GM12878 (cell line): ENCODE measurements at regions of chr9 and their contacts with region 1.

Region 1: GRCh38 chr9:112074250-112075008 is 100.7 kb downstream of the SUSD1 start:
- DNase-seq: peak; percentile 84
- ATAC-seq: peak; percentile 72
- H3K4me3 ChIP-seq: peak overlapping the region; percentile 4; the same call in 1 of the 2 replicates
- H3K27ac ChIP-seq: peak overlapping the region; percentile 73
- H3K4me1 ChIP-seq: peaks cover 66% of the 10 kb centered on the region
- H3K27me3 ChIP-seq: no peaks in the 10 kb centered on the region
- CTCF ChIP-seq: peak; percentile 91 to 97 (median 97)
- EP300 ChIP-seq: no peak
- POLR2A ChIP-seq: no peak
- RAD21 ChIP-seq: peak; percentile 99

Region 2: DNA sequence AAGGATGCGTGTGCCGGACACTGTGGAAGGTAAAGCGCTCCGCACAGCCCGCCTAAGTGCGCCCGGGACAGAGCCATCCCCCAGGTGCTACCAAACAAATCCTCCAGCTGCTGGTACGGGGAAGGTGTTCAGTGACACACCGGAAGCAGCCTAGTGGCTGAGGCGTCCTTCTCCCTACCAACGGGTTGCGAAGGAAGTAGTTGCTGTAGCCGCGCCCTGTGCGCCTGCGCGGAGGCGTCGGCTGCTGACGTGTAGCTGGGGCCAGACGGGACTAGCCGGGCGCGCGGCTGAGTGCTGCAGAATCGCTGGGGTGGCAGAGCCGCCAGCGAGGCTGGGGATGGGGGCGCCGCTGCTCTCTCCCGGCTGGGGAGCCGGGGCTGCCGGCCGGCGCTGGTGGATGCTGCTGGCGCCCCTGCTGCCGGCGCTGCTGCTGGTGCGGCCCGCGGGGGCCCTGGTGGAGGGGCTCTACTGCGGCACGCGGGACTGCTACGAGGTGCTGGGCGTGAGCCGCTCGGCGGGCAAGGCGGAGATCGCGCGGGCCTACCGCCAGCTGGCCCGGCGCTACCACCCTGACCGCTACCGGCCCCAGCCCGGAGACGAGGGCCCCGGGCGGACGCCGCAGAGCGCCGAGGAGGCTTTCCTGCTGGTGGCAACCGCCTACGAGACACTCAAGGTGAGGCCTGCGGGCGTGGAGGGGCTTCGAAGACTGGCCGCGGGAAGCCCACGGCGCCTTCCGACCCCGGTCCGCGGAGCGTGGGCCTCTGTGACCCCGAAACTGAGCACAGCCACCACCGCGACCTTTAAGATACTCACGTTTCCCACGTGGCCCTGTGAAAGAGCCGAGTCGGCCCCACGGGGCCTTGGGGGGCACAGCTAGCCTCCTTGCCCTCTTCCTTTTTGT is 443.1 kb before region 1 on chr9 and contains the start of gene DNAJC25:
- CTCF ChIA-PET with region 1: no interaction called
- POLR2A ChIA-PET with region 1: no interaction called
- RAD21 ChIA-PET with region 1: interaction called, 3 read pairs
- SMC1A ChIA-PET with region 1: no interaction called
- in situ Hi-C with region 1: no loop called
- intact Hi-C with region 1: loop called (anchors 10 kb)
- DNase-seq: peak; percentile 97
- ATAC-seq: peak; percentile 94
- H3K4me3 ChIP-seq: peak within 1 kb of the TSS; percentile 86
- H3K27ac ChIP-seq: peak within 1 kb of the TSS; percentile 57
- H3K4me1 ChIP-seq: no peaks in the 10 kb centered on the region; the same call in 1 of the 2 replicates
- H3K27me3 ChIP-seq: no peaks in the 10 kb centered on the region
- CTCF ChIP-seq: no peak
- EP300 ChIP-seq: no peak
- POLR2A ChIP-seq: peak; percentile 100
- RAD21 ChIP-seq: no peak
- polyA plus RNA-seq, gene DNAJC25: 2.4 to 3.7 TPM

Region 3: GRCh38 chr9:111902396-111903147 is 171.9 kb before region 1 on chr9:
- CTCF ChIA-PET with region 1: interaction called, 8 read pairs
- POLR2A ChIA-PET with region 1: interaction called, 8 read pairs
- RAD21 ChIA-PET with region 1: interaction called, 11 read pairs
- SMC1A ChIA-PET with region 1: interaction called, 23 read pairs
- in situ Hi-C with region 1: no loop called
- intact Hi-C with region 1: loop called (anchors 2 kb)
- DNase-seq: no peak
- ATAC-seq: no peak
- H3K4me3 ChIP-seq: peak overlapping the region; percentile 80; the same call in 1 of the 2 replicates
- H3K27ac ChIP-seq: peak overlapping the region; percentile 37; the same call in 1 of the 2 replicates
- H3K4me1 ChIP-seq: peaks cover 26% of the 10 kb centered on the region
- H3K27me3 ChIP-seq: no peaks in the 10 kb centered on the region
- CTCF ChIP-seq: no peak
- EP300 ChIP-seq: no peak
- POLR2A ChIP-seq: no peak
- RAD21 ChIP-seq: no peak

Region 4: DNA sequence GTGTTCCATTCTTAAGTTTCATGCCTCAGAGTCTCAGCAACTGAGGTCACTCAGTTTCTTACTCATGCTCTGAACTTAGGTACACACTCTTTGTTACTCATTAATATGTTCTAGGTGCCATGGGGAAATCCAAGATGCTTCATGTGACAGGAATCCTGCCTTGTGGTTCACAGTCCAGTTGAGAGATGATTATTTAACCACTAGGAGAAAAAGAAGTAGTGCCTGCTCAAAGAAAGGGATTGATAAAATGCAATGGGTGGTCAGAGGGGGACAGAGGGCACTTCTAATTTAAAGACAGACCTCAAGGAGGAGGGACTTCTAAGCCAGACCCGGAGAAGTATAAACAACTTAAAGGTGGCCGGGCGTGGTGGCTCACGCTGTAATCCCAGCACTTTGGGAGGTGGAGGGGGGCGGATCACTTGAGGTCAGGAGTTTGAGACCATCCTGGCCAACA is 108.8 kb before region 1 on chr9:
- CTCF ChIA-PET with region 1: interaction called, 8 read pairs
- POLR2A ChIA-PET with region 1: interaction called, 5 read pairs
- RAD21 ChIA-PET with region 1: interaction called, 20 read pairs
- SMC1A ChIA-PET with region 1: interaction called, 12 read pairs
- in situ Hi-C with region 1: no loop called
- intact Hi-C with region 1: no loop called
- DNase-seq: peak; percentile 90
- ATAC-seq: peak; percentile 80
- H3K4me3 ChIP-seq: no peak overlapping the region
- H3K27ac ChIP-seq: peak overlapping the region; percentile 56
- H3K4me1 ChIP-seq: peaks cover 25% of the 10 kb centered on the region
- H3K27me3 ChIP-seq: no peaks in the 10 kb centered on the region
- CTCF ChIP-seq: no peak
- EP300 ChIP-seq: peak; percentile 82 to 89
- POLR2A ChIP-seq: no peak
- RAD21 ChIP-seq: 0 out of 2 replicates have a peak, but pooled peaks have one; percentile 3

Region 5: GRCh38 chr9:112012026-112012902 is 62.2 kb before region 1 on chr9:
- CTCF ChIA-PET with region 1: interaction called, 21 read pairs
- POLR2A ChIA-PET with region 1: interaction called, 9 read pairs
- RAD21 ChIA-PET with region 1: interaction called, 40 read pairs
- SMC1A ChIA-PET with region 1: interaction called, 33 read pairs
- in situ Hi-C with region 1: no loop called
- intact Hi-C with region 1: no loop called
- DNase-seq: peak; percentile 96
- ATAC-seq: peak; percentile 92
- H3K4me3 ChIP-seq: no peak overlapping the region
- H3K27ac ChIP-seq: peak overlapping the region; percentile 92
- H3K4me1 ChIP-seq: peaks cover 52% of the 10 kb centered on the region
- H3K27me3 ChIP-seq: no peaks in the 10 kb centered on the region
- CTCF ChIP-seq: no peak
- EP300 ChIP-seq: peak; percentile 96 to 97
- POLR2A ChIP-seq: peak; percentile 43; the same call in 1 of the 2 replicates
- RAD21 ChIP-seq: peak; percentile 35

Region 6: DNA sequence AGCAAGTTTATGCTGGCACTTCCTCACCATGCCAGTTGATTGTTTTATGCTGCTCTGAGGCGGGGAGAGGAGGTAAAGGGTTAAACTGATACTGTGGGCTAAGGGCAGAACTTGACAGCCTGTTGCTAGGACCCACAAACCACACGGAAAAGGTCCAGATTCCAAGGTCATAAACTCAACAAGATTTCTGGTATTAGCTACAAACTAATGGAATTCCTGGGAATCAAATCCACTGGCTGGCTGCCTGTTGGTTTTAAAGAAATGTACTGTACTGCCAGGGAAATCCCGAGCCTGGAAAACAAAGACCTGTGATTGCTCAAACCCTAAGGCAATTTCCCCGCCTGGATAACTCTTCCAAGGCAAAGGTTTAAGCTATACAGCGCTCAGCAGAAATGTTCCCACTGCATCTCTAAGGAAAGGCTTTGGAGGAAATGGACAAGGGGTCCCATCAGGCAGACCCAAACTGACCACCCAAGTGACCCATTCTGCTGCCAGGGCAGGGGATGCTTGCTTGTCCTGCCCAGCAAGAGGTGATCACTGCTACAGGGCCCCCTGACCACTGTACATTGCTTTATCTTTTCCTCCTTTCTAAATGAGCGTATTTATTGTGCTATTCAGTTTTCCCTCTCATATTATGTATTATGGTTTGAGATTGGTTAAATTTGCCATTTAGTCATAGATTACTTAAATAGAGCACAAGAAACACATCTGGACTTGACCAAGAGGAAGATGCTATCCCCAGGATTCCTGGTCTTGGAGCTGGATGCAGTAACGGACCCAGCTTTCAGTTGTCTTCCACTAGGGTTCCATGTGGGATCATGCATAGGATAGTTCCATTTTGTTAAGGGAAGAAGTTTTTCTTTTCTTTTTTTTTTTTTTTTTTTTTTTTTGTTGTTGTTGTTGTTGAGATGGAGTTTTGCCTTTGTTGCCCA is 23.6 kb before region 1 on chr9:
- CTCF ChIA-PET with region 1: interaction called, 14 read pairs
- POLR2A ChIA-PET with region 1: interaction called, 15 read pairs
- RAD21 ChIA-PET with region 1: interaction called, 15 read pairs
- SMC1A ChIA-PET with region 1: interaction called, 32 read pairs
- in situ Hi-C with region 1: no loop called
- intact Hi-C with region 1: no loop called
- DNase-seq: no peak
- ATAC-seq: no peak
- H3K4me3 ChIP-seq: no peak overlapping the region
- H3K27ac ChIP-seq: no peak overlapping the region
- H3K4me1 ChIP-seq: peaks cover 31% of the 10 kb centered on the region
- H3K27me3 ChIP-seq: no peaks in the 10 kb centered on the region
- CTCF ChIP-seq: no peak
- EP300 ChIP-seq: no peak
- POLR2A ChIP-seq: no peak
- RAD21 ChIP-seq: no peak

Region 7: GRCh38 chr9:112361601-112362000 is 287.2 kb after region 1 on chr9:
- CTCF ChIA-PET with region 1: interaction called, 12 read pairs
- POLR2A ChIA-PET with region 1: no interaction called
- RAD21 ChIA-PET with region 1: interaction called, 5 read pairs
- SMC1A ChIA-PET with region 1: interaction called, 8 read pairs
- in situ Hi-C with region 1: no loop called
- intact Hi-C with region 1: no loop called
- DNase-seq: no peak
- ATAC-seq: peak; percentile 71
- H3K4me3 ChIP-seq: no peak overlapping the region
- H3K27ac ChIP-seq: no peak overlapping the region
- H3K4me1 ChIP-seq: no peaks in the 10 kb centered on the region
- H3K27me3 ChIP-seq: no peaks in the 10 kb centered on the region
- CTCF ChIP-seq: peak in 2 of 3 experiments; percentile 30 to 55; a peak in 2 of 6 replicates
- EP300 ChIP-seq: no peak
- POLR2A ChIP-seq: no peak
- RAD21 ChIP-seq: peak; percentile 60